ENCODE measurements at regions of chr17 and their contacts with region 1.

Region 1: DNA sequence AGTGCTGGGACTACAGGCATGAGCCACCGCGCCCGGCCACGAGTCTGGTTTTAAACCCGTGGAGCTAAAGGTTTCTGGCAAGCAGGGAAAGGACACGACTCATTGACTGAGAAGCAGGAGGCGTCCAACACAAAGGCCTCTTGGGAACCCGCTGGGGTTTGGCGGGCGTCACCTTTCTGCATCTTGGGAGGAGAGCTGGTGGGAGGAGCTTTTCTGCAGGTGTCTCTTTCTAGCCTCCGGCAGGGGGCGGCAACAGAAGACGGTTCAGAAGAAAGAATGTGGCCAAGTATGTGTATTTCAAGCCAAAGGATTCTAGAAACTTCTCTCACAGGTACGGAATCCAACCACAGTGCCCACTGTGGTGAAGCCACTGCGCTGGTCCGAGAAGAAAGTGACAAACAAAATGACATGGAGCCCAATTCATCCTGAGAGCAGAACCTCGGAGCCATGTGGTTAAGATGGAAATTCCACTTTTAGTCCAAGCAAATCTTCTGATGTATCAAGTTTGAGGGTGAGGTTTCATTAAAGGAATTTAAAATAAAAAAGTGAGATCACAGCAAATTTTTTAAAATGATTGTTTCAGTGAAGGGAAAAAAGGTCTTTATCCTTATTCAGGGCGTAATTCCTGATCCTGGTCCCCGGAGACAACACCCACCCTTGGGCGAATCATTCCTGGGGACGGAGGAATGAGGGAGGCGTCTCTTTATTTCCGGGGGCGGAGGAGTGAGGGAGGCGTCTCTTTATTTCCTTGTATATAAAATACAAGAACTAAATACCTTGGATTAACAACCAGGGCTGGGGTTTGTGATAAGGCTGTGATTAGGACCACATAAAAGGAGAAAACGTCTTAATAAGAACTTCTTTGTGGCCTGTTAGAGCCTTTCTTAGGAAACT is 97.6 kb downstream of the MRM3 start:
- DNase-seq: peak; percentile 98
- H3K4me3 Mint-ChIP-seq: peak overlapping the region; percentile 66
- H3K27ac Mint-ChIP-seq: peak overlapping the region; percentile 91
- H3K4me1 Mint-ChIP-seq: peaks cover 34% of the 10 kb centered on the region
- H3K27me3 Mint-ChIP-seq: no peaks in the 10 kb centered on the region
- CTCF ChIP-seq: peak; percentile 59

Region 2: DNA sequence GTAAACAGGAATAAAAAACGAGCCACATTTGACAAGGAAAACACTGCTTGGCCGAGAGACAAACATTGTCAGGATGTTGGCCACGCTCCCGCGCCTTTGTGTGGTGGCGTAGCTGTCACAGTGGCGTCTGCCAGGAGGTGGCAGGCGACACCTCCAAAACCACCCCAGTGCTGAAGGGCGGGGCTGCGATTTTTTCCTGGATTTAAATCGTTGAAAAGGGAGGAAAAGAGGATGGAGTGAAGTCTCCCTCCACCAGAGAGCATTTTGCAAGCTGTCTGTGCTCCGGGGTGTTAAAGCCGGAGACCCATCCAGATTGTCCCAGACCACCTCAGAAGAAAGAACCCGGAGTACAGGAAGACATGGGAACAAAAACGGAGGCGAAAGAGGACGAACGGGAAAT is 84.9 kb before region 1 on chr17:
- CTCF ChIA-PET with region 1: interaction called, 10 read pairs
- POLR2A ChIA-PET with region 1: interaction called, 3 read pairs
- intact Hi-C with region 1: loop called (anchors 1 kb)
- DNase-seq: peak; percentile 58
- H3K4me3 Mint-ChIP-seq: no peak overlapping the region
- H3K27ac Mint-ChIP-seq: no peak overlapping the region
- H3K4me1 Mint-ChIP-seq: peaks cover 6% of the 10 kb centered on the region
- H3K27me3 Mint-ChIP-seq: no peaks in the 10 kb centered on the region
- CTCF ChIP-seq: peak; percentile 70

Region 3: GRCh38 chr17:903981-904481 is 24.2 kb after region 1 on chr17:
- CTCF ChIA-PET with region 1: interaction called, 5 read pairs
- POLR2A ChIA-PET with region 1: interaction called, 18 read pairs
- intact Hi-C with region 1: loop called (anchors 2 kb)
- DNase-seq: peak; percentile 90
- H3K4me3 Mint-ChIP-seq: peak overlapping the region; percentile 61
- H3K27ac Mint-ChIP-seq: peak overlapping the region; percentile 99
- H3K4me1 Mint-ChIP-seq: peaks cover 31% of the 10 kb centered on the region
- H3K27me3 Mint-ChIP-seq: no peaks in the 10 kb centered on the region
- CTCF ChIP-seq: no peak

Region 4: GRCh38 chr17:951325-952132 is 71.7 kb after region 1 on chr17:
- CTCF ChIA-PET with region 1: interaction called, 3 read pairs
- POLR2A ChIA-PET with region 1: interaction called, 4 read pairs
- intact Hi-C with region 1: loop called (anchors 1 kb)
- DNase-seq: peak; percentile 31
- H3K4me3 Mint-ChIP-seq: peak overlapping the region; percentile 40
- H3K27ac Mint-ChIP-seq: peak overlapping the region; percentile 42
- H3K4me1 Mint-ChIP-seq: peaks cover 6% of the 10 kb centered on the region
- H3K27me3 Mint-ChIP-seq: no peaks in the 10 kb centered on the region
- CTCF ChIP-seq: no peak